Activated CD4-positive, alpha-beta T cell treated with anti-CD3 and anti-CD28 coated beads for 36 hours (primary cell): ENCODE measurements at regions of chr1 and their contacts with region 1.

Region 1: GRCh38 chr1:171313835-171314320 is at the start of gene FMO4:
- DNase-seq: peak; percentile 86
- ATAC-seq: peak; percentile 100
- H3K4me3 Mint-ChIP-seq: peak within 1 kb of the TSS; percentile 72
- H3K27ac Mint-ChIP-seq: peak within 1 kb of the TSS; percentile 87
- H3K4me1 Mint-ChIP-seq: peaks cover 14% of the 10 kb centered on the region
- H3K27me3 Mint-ChIP-seq: no peaks in the 10 kb centered on the region
- total RNA-seq, gene FMO4: 1.4 to 2.8 TPM

Region 2: DNA sequence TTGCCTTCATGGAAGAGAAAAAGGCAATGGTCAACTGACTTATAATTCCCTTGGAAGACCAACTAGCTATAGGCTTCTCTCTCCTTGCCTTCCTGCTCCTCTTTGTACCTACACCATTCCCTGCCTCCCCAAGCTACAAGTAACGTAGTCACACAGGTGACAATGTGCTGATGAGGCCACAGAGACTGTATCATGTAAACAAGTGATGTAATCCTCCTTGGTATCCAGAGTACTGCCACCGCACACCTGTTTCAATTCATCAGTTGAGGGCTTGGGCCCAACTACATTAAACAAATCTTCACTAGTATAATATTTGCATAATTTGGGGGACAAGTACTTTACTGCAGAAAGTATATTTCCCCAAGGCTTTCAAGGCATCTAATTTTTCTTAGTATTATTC is 1343.8 kb before region 1 on chr1:
- CTCF ChIA-PET with region 1: no interaction called
- POLR2A ChIA-PET with region 1: no interaction called
- intact Hi-C with region 1: no loop called
- DNase-seq: no peak
- ATAC-seq: no peak
- H3K4me3 Mint-ChIP-seq: no peak overlapping the region
- H3K27ac Mint-ChIP-seq: no peak overlapping the region
- H3K4me1 Mint-ChIP-seq: no peaks in the 10 kb centered on the region
- H3K27me3 Mint-ChIP-seq: no peaks in the 10 kb centered on the region

Region 3: DNA sequence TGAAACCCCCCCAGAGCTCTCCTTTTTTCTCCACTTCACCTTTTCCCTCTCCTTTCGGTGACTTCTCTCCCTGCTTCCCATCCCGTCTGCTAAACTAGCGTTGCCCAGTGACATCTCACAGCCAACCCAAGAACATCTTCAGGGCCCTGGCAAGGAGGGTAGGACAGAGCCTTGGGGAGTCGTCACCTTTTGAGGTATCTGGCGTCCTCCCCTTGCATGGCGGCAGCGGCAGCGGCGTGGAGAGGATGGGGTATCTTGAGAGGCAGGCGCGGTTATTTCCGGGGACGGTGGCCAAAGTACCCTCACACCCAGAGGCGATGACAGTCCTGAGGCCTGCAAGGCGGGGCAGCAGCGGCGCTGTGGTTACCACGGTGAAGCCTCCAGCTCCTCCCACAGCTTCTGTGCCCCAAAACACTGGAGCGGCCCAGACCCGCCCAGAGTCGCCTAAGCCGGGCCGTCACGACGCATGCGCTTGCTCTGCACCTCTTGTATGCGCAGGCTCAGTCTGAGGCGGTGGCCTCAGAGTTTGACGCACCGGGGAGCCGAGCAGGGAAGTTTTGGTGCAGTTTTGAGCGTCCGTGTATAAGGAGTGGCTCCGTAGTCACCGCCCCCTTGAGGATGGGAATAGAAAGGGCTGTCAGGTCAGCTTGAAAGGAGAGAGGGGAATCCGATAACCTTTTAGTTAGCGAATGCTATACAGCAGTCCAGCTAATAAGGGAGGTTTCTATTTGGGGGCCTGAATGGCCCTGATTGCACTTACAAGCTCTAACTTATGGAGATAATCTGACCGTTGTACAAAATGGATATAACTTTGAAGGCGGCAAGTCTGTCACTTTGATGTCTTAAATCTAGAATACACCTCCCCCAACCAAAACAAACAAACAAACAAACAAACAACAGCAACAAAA is 1239.4 kb before region 1 on chr1 and contains the start of gene KIFAP3:
- CTCF ChIA-PET with region 1: interaction called, 3 read pairs
- POLR2A ChIA-PET with region 1: interaction called, 3 read pairs
- intact Hi-C with region 1: loop called in 1 of 2 experiments (anchors 10 kb)
- DNase-seq: peak; percentile 98
- ATAC-seq: peak; percentile 99
- H3K4me3 Mint-ChIP-seq: peak within 1 kb of the TSS; percentile 96
- H3K27ac Mint-ChIP-seq: peak within 1 kb of the TSS; percentile 87
- H3K4me1 Mint-ChIP-seq: peaks cover 43% of the 10 kb centered on the region
- H3K27me3 Mint-ChIP-seq: no peaks in the 10 kb centered on the region
- total RNA-seq, gene KIFAP3: 10.9 to 11.5 TPM

Region 4: DNA sequence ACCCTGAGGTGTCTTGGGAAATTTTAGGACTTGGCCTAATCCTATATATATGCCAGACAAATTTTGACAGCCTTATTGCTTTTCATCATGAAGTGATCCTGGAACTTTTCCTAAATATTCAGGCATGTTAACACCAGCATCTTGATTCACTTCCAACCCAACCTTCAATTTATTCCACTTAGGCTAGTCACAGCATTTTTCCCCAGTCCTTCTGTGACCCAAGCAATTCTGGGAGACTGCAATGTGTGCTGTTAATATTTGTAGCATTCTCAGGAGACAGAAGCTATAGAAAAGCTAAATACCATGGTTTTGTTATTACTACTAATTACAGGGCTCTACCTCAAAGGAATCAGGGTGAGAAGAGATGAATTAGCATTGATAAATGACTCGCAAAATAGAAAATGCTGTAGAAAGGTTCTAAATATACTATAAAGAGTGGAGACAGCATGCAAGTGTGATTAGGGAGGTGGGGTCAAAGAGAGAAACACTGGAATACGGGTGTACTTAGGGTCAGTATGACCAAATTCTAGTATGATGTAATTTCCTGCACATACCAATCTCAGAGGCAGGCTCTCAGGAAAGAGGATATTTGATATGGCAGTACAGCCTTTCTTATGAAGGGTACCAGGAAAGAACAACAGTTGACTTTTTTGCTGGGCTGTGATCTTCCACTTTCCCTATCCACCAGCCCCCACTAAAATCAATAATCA is 620.9 kb before region 1 on chr1:
- CTCF ChIA-PET with region 1: interaction called, 7 read pairs
- POLR2A ChIA-PET with region 1: no interaction called
- intact Hi-C with region 1: loop called in 1 of 2 experiments (anchors 5 kb)
- DNase-seq: no peak
- ATAC-seq: no peak
- H3K4me3 Mint-ChIP-seq: no peak overlapping the region
- H3K27ac Mint-ChIP-seq: no peak overlapping the region
- H3K4me1 Mint-ChIP-seq: peaks cover 5% of the 10 kb centered on the region
- H3K27me3 Mint-ChIP-seq: peaks cover 25% of the 10 kb centered on the region

Region 5: GRCh38 chr1:171081314-171081753 is 232.5 kb before region 1 on chr1:
- CTCF ChIA-PET with region 1: interaction called, 4 read pairs
- POLR2A ChIA-PET with region 1: no interaction called
- intact Hi-C with region 1: loop called in 1 of 2 experiments (anchors 5 kb)
- DNase-seq: no peak
- ATAC-seq: no peak
- H3K4me3 Mint-ChIP-seq: no peak overlapping the region
- H3K27ac Mint-ChIP-seq: no peak overlapping the region
- H3K4me1 Mint-ChIP-seq: no peaks in the 10 kb centered on the region
- H3K27me3 Mint-ChIP-seq: peaks cover 4% of the 10 kb centered on the region

Region 6: DNA sequence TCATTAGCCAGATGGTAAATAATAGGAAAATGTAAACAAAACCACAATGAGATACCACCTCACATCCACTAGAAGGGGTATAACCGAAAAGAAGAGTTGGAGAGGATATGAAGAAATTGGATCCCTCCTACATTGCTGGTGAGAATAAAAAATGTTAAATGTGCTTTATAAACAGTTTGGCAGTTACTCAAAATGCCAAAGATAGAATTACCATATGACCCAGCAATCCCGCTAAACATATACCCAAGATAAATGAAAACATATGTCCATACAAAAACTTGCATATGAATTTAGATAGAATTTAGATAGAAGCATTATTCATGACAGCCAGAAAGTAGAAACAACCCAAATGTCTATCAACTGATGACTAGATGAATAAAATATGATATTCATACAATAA is 133.2 kb before region 1 on chr1:
- CTCF ChIA-PET with region 1: no interaction called
- POLR2A ChIA-PET with region 1: no interaction called
- intact Hi-C with region 1: no loop called
- DNase-seq: no peak
- ATAC-seq: no peak
- H3K4me3 Mint-ChIP-seq: no peak overlapping the region
- H3K27ac Mint-ChIP-seq: no peak overlapping the region
- H3K4me1 Mint-ChIP-seq: no peaks in the 10 kb centered on the region
- H3K27me3 Mint-ChIP-seq: peaks cover 17% of the 10 kb centered on the region

Region 7: GRCh38 chr1:171245458-171246064 is 68.3 kb before region 1 on chr1:
- CTCF ChIA-PET with region 1: interaction called, 50 read pairs
- POLR2A ChIA-PET with region 1: no interaction called
- intact Hi-C with region 1: loop called (anchors 1 kb)
- DNase-seq: peak; percentile 35
- ATAC-seq: no peak
- H3K4me3 Mint-ChIP-seq: no peak overlapping the region
- H3K27ac Mint-ChIP-seq: no peak overlapping the region
- H3K4me1 Mint-ChIP-seq: no peaks in the 10 kb centered on the region
- H3K27me3 Mint-ChIP-seq: peaks cover 17% of the 10 kb centered on the region